Colonic mucosa (tissue), 4 donors: ENCODE measurements at regions of chr10 and their contacts with region 1.

Region 1: GRCh38 chr10:511101-511848 is 178.2 kb downstream of the DIP2C start:
- DNase-seq: peak; percentile 96
- H3K4me3 ChIP-seq: no peak overlapping the region
- H3K27ac ChIP-seq: no peak overlapping the region
- H3K4me1 ChIP-seq: no peaks in the 10 kb centered on the region
- H3K27me3 ChIP-seq: no peaks in the 10 kb centered on the region
- CTCF ChIP-seq: peak; percentile 98

Region 2: GRCh38 chr10:536371-536925 is 25.2 kb after region 1 on chr10:
- intact Hi-C with region 1: no loop called
- DNase-seq: no peak
- H3K4me3 ChIP-seq: no peak overlapping the region
- H3K27ac ChIP-seq: no peak overlapping the region
- H3K4me1 ChIP-seq: no peaks in the 10 kb centered on the region
- H3K27me3 ChIP-seq: no peaks in the 10 kb centered on the region
- CTCF ChIP-seq: no peak

Region 3: GRCh38 chr10:659688-660141 is 148.4 kb after region 1 on chr10:
- intact Hi-C with region 1: loop called (anchors 10 kb)
- DNase-seq: no peak
- H3K4me3 ChIP-seq: no peak overlapping the region
- H3K27ac ChIP-seq: peak overlapping the region; percentile 22
- H3K4me1 ChIP-seq: peaks cover 5% of the 10 kb centered on the region
- H3K27me3 ChIP-seq: no peaks in the 10 kb centered on the region
- CTCF ChIP-seq: no peak

Region 4: DNA sequence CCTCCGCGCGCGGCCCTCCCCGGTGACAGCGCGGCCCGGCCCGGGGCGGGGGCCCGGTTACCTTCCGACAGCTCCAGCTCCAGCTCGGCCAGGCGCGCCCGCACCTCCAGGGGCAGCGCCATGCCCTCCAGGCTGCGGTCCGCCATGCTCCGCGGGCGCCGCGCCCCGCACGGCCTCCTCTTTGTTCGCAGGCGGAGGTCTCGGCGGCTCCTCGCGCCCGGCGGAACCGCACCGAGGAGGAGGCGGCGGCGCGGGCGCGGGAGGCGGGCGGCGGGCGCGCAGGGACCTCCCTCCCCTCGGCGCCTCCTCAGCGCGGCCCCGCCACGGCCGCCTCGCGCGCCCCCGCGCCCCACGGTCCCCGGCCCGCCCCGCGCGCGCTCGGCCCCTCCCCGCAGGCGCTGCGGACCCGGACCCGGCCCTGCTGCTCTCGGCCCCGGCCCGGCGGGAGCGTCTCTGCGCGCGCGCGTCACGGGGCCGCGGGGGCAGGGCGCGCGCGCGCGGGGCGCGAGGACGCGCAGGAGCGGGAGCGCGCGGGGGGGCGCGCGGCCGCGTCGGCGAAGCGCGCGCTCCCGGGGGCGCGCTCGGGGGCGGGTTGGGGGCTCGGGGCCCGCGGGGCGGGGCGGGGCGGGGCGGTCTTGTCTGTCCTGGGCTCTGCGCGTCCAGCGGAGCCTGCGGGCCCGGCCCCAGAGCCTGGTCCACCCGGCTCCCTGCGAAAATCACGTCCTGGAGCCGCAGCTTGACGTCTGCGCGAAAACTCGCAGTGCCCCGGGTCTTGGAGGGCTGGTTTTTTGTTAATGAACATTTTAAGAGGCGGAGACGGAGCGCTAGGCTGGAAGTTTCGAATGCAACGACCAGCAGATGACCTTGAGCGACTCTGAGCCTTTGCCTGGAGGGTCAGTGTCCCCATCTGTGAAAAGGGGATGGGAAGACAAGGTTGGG is 178.4 kb after region 1 on chr10 and contains the start of gene DIP2C:
- intact Hi-C with region 1: loop called (anchors 10 kb)
- DNase-seq: peak; percentile 44
- H3K4me3 ChIP-seq: peak within 1 kb of the TSS; percentile 63
- H3K27ac ChIP-seq: peak within 1 kb of the TSS; percentile 63
- H3K4me1 ChIP-seq: no peaks in the 10 kb centered on the region
- H3K27me3 ChIP-seq: no peaks in the 10 kb centered on the region
- CTCF ChIP-seq: no peak
- total RNA-seq, gene DIP2C: 7.6 to 11.2 TPM

Region 5: DNA sequence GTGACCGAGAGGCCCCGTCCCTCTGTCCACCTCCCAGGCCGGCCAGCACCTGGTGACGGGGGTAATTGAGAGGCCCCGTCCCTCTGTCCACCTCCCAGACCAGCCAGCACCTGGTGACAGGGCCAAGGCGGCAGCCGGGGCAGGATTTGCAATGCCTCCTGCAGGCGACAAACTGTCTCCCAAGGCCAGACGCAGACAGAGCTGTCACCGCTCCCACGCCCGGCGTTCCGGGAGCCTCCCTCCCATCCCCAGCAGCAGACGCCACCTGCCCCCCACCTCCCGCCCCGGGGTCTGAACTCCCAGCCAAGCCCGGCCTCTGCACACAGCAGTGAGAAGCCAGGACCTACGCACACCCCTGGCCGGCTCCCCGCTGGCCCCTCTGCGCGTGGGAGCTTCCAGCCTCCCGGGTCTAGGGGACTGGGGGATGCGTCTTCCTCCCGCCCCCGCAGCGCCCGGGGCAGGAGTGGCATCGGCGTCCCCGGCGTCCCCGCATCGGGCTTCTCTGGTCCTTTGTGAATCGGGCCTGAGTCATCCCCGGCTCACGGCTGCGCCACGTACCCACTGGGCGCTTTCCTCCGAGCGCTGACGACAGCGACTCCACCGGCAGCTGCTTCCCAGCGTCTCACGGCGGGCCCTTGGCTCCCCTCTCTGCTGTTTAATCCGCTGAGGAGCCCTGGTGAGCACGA is 273.3 kb after region 1 on chr10:
- intact Hi-C with region 1: loop called (anchors 5 kb)
- DNase-seq: peak; percentile 30
- H3K4me3 ChIP-seq: peak overlapping the region; percentile 22
- H3K27ac ChIP-seq: no peak overlapping the region
- H3K4me1 ChIP-seq: no peaks in the 10 kb centered on the region
- H3K27me3 ChIP-seq: peaks cover 6% of the 10 kb centered on the region
- CTCF ChIP-seq: no peak